Mammary epithelial cell (primary cell): ENCODE measurements at regions of chr11 and their contacts with region 1.

Region 1: DNA sequence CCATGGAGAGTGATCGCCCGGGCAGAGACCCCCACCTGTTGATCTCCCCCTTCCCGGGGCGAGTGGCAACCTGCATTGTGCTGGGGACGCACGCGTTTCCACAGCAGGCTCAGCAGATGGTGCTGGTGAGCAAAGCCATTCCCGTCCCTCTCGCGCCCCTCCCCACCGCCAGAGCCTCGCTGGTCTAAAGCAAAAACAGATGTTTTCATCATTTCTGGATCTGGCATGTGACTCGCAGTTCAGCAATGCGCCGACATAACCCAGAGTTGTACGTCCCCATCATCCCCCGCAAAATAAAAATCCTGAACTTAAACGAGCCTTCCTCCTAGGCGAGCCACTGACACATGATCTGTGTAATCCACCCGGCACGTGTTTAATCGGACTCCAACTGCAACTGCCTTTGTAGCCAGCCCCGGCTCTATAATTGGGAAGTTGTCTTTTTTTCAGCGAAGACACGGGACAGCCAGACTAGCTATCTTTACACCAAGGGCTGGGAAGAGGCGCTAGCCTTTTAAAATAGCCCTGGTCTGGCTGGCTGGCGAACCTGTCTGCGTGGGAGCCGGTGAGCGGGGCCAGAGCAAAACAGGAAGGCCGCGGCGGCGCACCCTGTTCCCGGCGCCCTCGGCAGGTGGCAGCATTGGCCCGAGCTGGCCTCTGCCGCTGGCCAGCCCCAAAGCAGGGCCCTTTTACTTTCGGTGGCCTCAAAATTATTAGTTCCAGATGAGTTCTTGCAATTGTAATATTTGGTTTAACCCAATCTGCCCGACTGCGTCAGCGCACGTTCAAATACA is 203.0 kb upstream of the SORL1-AS1 start:
- DNase-seq: peak; percentile 73
- H3K4me3 ChIP-seq: peak overlapping the region; percentile 45 to 59 (median 56)
- H3K27ac ChIP-seq: peak overlapping the region; percentile 58
- H3K4me1 ChIP-seq: peaks cover 20% of the 10 kb centered on the region
- H3K27me3 ChIP-seq: no peaks in the 10 kb centered on the region
- CTCF ChIP-seq: peak; percentile 77 to 97

Region 2: GRCh38 chr11:121318848-121319834 is 336.6 kb before region 1 on chr11:
- CTCF ChIA-PET with region 1: no interaction called
- dilution Hi-C with region 1: no loop called
- in situ Hi-C with region 1: no loop called
- intact Hi-C with region 1: loop called (anchors 1 kb)
- DNase-seq: peak; percentile 49
- H3K4me3 ChIP-seq: no peak overlapping the region
- H3K27ac ChIP-seq: no peak overlapping the region
- H3K4me1 ChIP-seq: peaks cover 4% of the 10 kb centered on the region
- H3K27me3 ChIP-seq: no peaks in the 10 kb centered on the region
- CTCF ChIP-seq: peak; percentile 79 to 89

Region 3: DNA sequence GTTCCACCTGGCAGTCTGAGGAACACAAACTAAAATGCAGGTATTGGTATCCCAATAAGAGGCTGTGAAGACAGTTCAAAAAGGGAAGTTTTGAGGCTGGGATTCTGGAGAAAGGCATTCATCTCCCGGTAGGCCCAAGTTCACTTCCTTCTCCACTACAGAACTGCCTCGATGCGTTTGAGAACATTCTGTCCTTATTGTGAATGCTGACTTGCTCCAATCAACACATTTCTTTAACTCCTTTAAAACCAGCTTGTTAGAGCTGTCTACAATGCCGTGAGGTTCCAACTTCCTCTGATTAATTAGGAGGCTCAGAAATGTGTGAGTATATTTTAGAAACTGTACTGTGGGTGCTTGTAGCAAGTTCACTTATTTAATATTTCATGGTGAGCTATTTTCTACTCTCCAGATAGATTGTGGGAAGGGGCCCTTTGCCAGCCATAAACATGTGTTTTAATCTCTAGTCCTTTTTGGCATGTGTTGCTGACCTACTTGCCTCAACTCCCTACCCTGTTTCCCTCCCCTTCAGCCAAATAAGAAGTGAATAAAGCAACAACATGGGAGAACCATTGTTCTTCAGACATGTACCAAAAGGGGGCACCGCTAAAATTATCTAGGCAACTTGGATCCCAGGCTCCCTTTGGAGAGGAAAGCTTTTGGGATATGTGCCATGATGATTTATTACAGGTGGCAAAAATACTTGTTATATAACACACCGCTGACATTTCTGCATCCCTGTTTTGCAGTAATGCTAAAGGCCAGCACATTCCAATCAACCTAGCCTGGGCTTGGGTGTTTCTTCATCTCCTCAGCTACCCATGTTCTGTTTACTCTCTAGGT is 214.7 kb after region 1 on chr11:
- CTCF ChIA-PET with region 1: no interaction called
- dilution Hi-C with region 1: no loop called
- in situ Hi-C with region 1: no loop called
- intact Hi-C with region 1: loop called (anchors 5 kb)
- DNase-seq: no peak
- H3K4me3 ChIP-seq: no peak overlapping the region
- H3K27ac ChIP-seq: no peak overlapping the region
- H3K4me1 ChIP-seq: no peaks in the 10 kb centered on the region
- H3K27me3 ChIP-seq: peaks cover 5% of the 10 kb centered on the region
- CTCF ChIP-seq: peak in 1 of 2 donors; percentile 29

Region 4: DNA sequence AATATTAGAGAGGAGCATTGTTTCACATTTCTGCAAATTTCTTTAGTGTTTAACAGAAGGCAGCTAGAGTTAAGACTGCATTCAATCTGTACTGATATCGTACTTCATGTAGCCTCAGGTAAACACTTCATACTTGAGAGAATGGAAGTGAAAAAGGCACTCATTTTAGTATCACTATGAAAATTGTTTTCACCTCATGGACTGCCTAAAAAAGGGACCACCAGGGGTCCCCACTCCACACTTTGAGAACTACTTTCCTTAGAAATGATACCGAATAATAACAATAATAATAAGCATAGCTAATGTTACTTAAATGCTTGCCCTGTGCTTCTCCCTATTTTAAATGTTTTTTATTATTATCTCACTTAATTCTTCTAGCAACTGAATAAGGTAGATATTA is 365.2 kb after region 1 on chr11:
- CTCF ChIA-PET with region 1: no interaction called
- dilution Hi-C with region 1: no loop called
- in situ Hi-C with region 1: no loop called
- intact Hi-C with region 1: loop called (anchors 1 kb)
- DNase-seq: no peak
- H3K4me3 ChIP-seq: no peak overlapping the region
- H3K27ac ChIP-seq: no peak overlapping the region
- H3K4me1 ChIP-seq: no peaks in the 10 kb centered on the region
- H3K27me3 ChIP-seq: no peaks in the 10 kb centered on the region
- CTCF ChIP-seq: peak; percentile 26 to 36

Region 5: DNA sequence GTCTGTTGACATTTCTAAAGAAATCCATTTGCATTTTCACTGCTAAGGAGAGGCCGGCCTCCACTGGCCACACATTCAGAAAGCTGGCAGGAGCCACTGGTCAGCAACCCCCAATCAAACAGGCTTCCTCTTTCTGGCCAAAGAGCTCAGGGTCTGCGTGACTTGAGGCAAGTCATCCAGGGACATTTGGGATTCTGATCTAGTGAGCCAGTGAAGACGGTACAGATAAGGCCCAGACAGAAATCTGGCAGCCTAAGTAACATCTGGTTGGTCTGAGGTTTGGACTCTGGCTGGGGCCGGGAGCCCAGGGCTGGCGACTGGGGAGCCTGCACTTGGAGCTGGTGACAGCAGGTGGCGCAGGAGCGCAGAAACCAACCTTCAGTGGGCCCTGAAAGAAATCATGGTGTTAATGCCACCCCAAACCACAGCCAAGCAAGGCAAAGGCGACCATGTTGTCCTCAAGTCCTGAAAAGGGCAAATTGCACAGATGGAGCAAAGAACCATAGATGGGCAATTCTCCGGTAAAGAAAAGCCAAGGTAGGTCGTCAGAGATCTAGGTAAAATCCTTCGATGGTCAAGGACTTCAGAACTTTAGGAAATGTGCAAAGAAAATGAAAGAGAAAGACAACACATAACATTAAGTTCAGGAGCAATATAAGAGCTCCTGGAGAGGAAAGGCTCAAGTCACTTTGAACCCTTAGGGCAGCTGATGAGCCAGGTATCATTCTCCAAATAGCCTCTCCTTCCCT is 559.7 kb after region 1 on chr11:
- CTCF ChIA-PET with region 1: no interaction called
- dilution Hi-C with region 1: no loop called
- in situ Hi-C with region 1: loop called in 1 of 2 experiments (anchors 10 kb)
- intact Hi-C with region 1: loop called (anchors 5 kb)
- DNase-seq: no peak
- H3K4me3 ChIP-seq: no peak overlapping the region
- H3K27ac ChIP-seq: no peak overlapping the region
- H3K4me1 ChIP-seq: peaks cover under 1% of the 10 kb centered on the region
- H3K27me3 ChIP-seq: no peaks in the 10 kb centered on the region
- CTCF ChIP-seq: peak; percentile 92 to 98

Region 6: GRCh38 chr11:122293296-122294023 is 637.7 kb after region 1 on chr11:
- CTCF ChIA-PET with region 1: no interaction called
- dilution Hi-C with region 1: no loop called
- in situ Hi-C with region 1: no loop called
- intact Hi-C with region 1: loop called (anchors 10 kb)
- DNase-seq: peak; percentile 5
- H3K4me3 ChIP-seq: no peak overlapping the region
- H3K27ac ChIP-seq: no peak overlapping the region
- H3K4me1 ChIP-seq: no peaks in the 10 kb centered on the region
- H3K27me3 ChIP-seq: peaks cover 4% of the 10 kb centered on the region
- CTCF ChIP-seq: peak; percentile 25 to 51